Activated naive CD4-positive, alpha-beta T cell treated with anti-CD3 and anti-CD28 coated beads for 36 hours (primary cell): ENCODE measurements at regions of chr5 and their contacts with region 1.

Region 1: GRCh38 chr5:56610093-56610698 is 205.2 kb upstream of the MAP3K1 start:
- DNase-seq: peak; percentile 74
- H3K4me3 Mint-ChIP-seq: no peak overlapping the region
- H3K27ac Mint-ChIP-seq: peak overlapping the region; percentile 59
- H3K4me1 Mint-ChIP-seq: peaks cover 74% of the 10 kb centered on the region
- H3K27me3 Mint-ChIP-seq: no peaks in the 10 kb centered on the region

Region 2: DNA sequence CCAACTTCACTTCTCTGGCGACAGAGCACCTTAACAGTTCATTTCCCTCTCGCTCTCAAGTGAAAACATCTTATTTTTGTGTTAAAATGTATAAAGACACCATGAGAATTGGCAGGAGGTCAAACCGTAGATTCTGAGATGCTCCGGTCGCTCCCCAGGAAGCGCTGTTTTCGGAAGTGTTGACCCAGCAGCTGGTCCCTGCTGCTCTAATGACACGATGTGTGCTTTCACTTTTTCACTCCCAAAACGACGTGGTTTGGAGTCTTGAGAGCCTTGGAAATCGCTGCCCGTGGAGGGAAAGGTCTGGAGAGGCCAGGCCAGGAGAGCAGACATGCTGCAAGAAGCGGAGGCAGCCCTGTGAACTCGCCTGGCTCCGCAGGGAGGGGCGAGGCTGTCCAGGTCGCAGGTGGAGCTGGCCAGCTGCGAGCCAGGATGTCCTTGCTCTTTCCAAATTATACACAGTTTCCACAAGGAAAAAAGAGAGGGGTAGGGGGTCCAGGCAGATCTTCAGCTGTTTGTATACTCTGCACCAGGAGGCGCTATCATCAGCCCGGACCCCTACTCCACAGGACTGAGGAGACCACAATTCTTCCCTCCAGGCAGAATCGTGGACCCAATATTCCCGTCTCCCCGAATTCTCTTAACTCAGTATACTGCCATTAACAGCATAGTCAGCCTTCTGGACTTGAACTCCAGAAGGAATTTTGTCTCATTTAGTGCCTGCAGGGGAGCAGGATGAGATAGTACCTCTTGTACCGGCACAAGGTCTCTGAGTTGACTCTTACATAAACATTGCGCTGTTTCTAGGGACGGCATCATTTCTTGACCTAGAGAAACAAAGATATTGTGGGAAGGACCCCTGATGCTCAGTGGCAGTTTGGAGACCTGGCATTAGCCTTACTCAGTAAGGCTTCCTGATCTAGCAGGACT is 128.5 kb before region 1 on chr5:
- CTCF ChIA-PET with region 1: no interaction called
- intact Hi-C with region 1: loop called (anchors 2 kb)
- DNase-seq: peak; percentile 14
- H3K4me3 Mint-ChIP-seq: peak overlapping the region; percentile 73
- H3K27ac Mint-ChIP-seq: no peak overlapping the region
- H3K4me1 Mint-ChIP-seq: peaks cover 30% of the 10 kb centered on the region
- H3K27me3 Mint-ChIP-seq: no peaks in the 10 kb centered on the region

Region 3: DNA sequence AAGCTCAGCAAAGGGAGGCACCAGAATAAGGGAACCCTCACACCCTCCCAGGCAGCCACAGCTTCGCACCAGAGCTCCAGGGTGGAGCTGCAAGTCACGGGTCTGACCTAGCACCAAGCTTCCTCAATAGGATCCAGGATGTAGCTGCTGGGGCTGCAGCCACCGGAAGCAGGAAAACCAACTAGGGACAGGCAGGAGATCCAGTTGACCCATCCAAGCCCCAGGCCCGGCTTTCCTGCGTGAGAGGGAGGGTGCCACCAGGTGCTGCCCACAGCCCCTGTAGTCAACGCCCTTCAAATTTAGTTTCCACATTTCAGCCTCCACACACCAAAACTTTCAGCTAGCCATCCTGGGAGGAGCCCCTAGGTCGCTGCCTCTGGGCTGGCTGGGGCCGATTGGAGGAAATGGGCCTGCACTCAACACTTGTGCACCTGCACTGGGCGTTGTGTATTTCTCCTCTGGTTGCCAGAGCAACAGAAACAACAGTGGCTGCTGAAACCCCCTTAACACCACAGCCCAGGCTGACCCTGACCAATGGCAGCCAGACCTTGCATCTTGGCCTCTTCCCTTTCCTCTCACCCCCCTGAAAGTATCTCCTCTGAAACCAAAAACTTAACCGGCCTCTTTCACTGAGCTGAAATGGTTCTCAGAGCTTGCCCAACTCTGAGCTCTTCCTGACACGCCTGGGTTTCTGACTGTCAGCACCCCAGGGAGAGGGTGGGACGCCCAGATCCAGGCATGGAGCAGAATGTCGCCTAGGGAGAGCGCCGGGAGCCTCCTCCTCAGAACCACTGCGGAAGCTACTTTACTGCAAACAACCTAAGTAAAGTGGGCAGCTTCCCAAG is 21.3 kb before region 1 on chr5:
- CTCF ChIA-PET with region 1: interaction called, 4 read pairs
- intact Hi-C with region 1: loop called (anchors 2 kb)
- DNase-seq: peak; percentile 52
- H3K4me3 Mint-ChIP-seq: no peak overlapping the region
- H3K27ac Mint-ChIP-seq: no peak overlapping the region
- H3K4me1 Mint-ChIP-seq: peaks cover 38% of the 10 kb centered on the region
- H3K27me3 Mint-ChIP-seq: no peaks in the 10 kb centered on the region

Region 4: GRCh38 chr5:56625541-56625940 is 15.3 kb after region 1 on chr5:
- CTCF ChIA-PET with region 1: no interaction called
- intact Hi-C with region 1: no loop called
- DNase-seq: no peak
- H3K4me3 Mint-ChIP-seq: no peak overlapping the region
- H3K27ac Mint-ChIP-seq: no peak overlapping the region
- H3K4me1 Mint-ChIP-seq: no peaks in the 10 kb centered on the region
- H3K27me3 Mint-ChIP-seq: no peaks in the 10 kb centered on the region

Region 5: GRCh38 chr5:56649569-56649968 is 39.4 kb after region 1 on chr5:
- CTCF ChIA-PET with region 1: no interaction called
- intact Hi-C with region 1: loop called (anchors 2 kb)
- DNase-seq: no peak
- H3K4me3 Mint-ChIP-seq: no peak overlapping the region
- H3K27ac Mint-ChIP-seq: no peak overlapping the region
- H3K4me1 Mint-ChIP-seq: peaks cover 26% of the 10 kb centered on the region
- H3K27me3 Mint-ChIP-seq: no peaks in the 10 kb centered on the region

Region 6: GRCh38 chr5:56692359-56693219 is 82.4 kb after region 1 on chr5:
- CTCF ChIA-PET with region 1: no interaction called
- intact Hi-C with region 1: loop called (anchors 2 kb)
- DNase-seq: no peak
- H3K4me3 Mint-ChIP-seq: peak overlapping the region; percentile 30
- H3K27ac Mint-ChIP-seq: peak overlapping the region; percentile 14
- H3K4me1 Mint-ChIP-seq: peaks cover 76% of the 10 kb centered on the region
- H3K27me3 Mint-ChIP-seq: no peaks in the 10 kb centered on the region